Activated CD8-positive, alpha-beta T cell treated with anti-CD3 and anti-CD28 coated beads for 36 hours (primary cell): ENCODE measurements at regions of chr4 and their contacts with region 1.

Region 1: GRCh38 chr4:1200425-1201035 is 28.1 kb upstream of the SPON2 start:
- DNase-seq: peak; percentile 65
- ATAC-seq: no peak
- H3K4me3 Mint-ChIP-seq: peak overlapping the region; percentile 72
- H3K27ac Mint-ChIP-seq: peak overlapping the region; percentile 96
- H3K4me1 Mint-ChIP-seq: peaks cover 43% of the 10 kb centered on the region
- H3K27me3 Mint-ChIP-seq: no peaks in the 10 kb centered on the region
- CTCF ChIP-seq: no peak

Region 2: DNA sequence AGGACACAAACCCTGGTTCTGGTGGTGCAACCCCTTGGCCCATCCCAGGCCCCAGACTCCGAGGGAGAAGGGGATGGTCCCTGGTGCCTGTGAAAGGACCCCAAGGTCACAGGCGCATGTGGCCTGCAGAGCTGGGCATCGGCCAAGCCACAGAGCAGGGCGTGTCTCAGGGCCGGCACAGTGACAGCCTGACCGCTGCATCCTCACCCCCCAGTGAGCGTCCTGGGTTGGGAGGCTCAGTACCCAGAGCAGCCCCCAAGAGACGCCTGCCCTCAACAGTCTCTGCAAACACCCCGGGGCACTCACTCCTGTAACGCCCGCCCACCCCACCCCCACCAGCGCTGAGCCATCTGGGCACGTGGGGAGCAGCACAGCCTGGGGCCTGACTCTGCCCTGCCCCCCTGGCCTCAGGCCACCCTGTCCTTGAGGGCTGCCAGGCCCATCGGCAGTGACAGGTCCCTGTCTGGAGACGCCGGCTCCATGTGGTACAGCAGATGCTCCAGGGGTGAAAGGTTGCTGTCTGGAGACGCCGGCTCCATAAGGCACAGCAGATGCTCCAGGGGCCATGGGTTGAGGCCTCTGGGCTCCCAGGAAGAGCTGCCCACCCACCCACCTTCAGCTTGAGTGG is 350.1 kb before region 1 on chr4:
- CTCF ChIA-PET with region 1: no interaction called
- POLR2A ChIA-PET with region 1: no interaction called
- intact Hi-C with region 1: no loop called
- DNase-seq: no peak
- ATAC-seq: no peak
- H3K4me3 Mint-ChIP-seq: no peak overlapping the region
- H3K27ac Mint-ChIP-seq: no peak overlapping the region
- H3K4me1 Mint-ChIP-seq: no peaks in the 10 kb centered on the region
- H3K27me3 Mint-ChIP-seq: no peaks in the 10 kb centered on the region
- CTCF ChIP-seq: no peak

Region 3: DNA sequence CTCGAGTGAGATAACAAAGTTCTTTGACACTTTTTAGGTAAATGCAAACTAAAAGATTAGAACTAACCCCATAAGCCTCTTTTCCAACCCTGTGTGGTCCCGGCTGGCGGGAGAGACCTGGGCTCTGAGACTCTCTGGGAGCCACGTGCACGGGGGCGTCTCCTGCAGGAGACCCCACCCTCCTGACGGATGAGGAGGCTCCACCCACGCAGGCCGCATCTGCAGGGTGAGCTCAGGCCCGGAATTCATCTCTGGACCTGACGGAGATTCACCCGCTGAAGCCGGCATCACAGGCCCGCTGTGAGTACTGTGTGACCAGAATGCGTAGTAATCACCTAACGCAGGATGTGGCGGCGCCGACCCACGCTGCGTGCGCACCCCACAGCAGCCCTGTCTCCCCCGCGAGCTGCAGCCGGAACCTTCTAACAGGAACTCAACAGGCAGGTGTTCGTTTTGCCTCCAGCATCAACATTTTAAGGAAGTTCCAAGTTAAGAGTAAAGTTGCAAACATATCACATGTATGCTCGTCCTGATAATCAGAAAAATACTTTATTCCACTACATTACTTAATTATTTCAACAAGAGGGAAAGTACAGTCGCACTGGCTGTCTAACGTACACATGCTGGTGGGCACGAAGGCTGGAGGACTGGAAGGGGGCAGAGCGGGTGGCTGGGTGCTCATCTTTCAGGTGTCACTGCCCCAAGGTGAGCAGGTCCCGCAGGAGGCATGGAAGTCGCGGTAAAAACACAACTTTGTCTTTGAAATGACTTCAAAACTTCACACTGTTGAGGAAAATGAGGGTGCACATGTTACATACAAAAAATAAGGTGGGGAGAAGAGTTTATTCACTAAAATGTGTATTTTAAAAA is 144.6 kb before region 1 on chr4:
- CTCF ChIA-PET with region 1: no interaction called
- POLR2A ChIA-PET with region 1: no interaction called
- intact Hi-C with region 1: no loop called
- DNase-seq: peak; percentile 91
- ATAC-seq: peak; percentile 99
- H3K4me3 Mint-ChIP-seq: peak overlapping the region; percentile 59
- H3K27ac Mint-ChIP-seq: peak overlapping the region; percentile 82
- H3K4me1 Mint-ChIP-seq: peaks cover 9% of the 10 kb centered on the region
- H3K27me3 Mint-ChIP-seq: peaks cover 3% of the 10 kb centered on the region
- CTCF ChIP-seq: no peak

Region 4: GRCh38 chr4:1167247-1167949 is 33.1 kb before region 1 on chr4:
- CTCF ChIA-PET with region 1: interaction called, 10 read pairs
- POLR2A ChIA-PET with region 1: interaction called, 11 read pairs
- intact Hi-C with region 1: no loop called
- DNase-seq: peak; percentile 97
- ATAC-seq: peak; percentile 92
- H3K4me3 Mint-ChIP-seq: peak overlapping the region; percentile 76
- H3K27ac Mint-ChIP-seq: peak overlapping the region; percentile 83
- H3K4me1 Mint-ChIP-seq: peaks cover 33% of the 10 kb centered on the region
- H3K27me3 Mint-ChIP-seq: peaks cover 13% of the 10 kb centered on the region
- CTCF ChIP-seq: peak; percentile 96

Region 5: GRCh38 chr4:1216869-1217294 is 16.4 kb after region 1 on chr4:
- CTCF ChIA-PET with region 1: interaction called, 4 read pairs
- POLR2A ChIA-PET with region 1: interaction called, 21 read pairs
- intact Hi-C with region 1: no loop called
- DNase-seq: peak; percentile 88
- ATAC-seq: peak; percentile 95
- H3K4me3 Mint-ChIP-seq: peak overlapping the region; percentile 66
- H3K27ac Mint-ChIP-seq: peak overlapping the region; percentile 79
- H3K4me1 Mint-ChIP-seq: peaks cover 43% of the 10 kb centered on the region
- H3K27me3 Mint-ChIP-seq: no peaks in the 10 kb centered on the region
- CTCF ChIP-seq: peak; percentile 18

Region 6: GRCh38 chr4:1249148-1249730 is 48.7 kb after region 1 on chr4:
- CTCF ChIA-PET with region 1: interaction called, 3 read pairs
- POLR2A ChIA-PET with region 1: interaction called, 30 read pairs
- intact Hi-C with region 1: loop called (anchors 5 kb)
- DNase-seq: peak; percentile 79
- ATAC-seq: peak; percentile 51
- H3K4me3 Mint-ChIP-seq: peak overlapping the region; percentile 86
- H3K27ac Mint-ChIP-seq: peak overlapping the region; percentile 91
- H3K4me1 Mint-ChIP-seq: peaks cover 69% of the 10 kb centered on the region
- H3K27me3 Mint-ChIP-seq: no peaks in the 10 kb centered on the region
- CTCF ChIP-seq: no peak